Colonic mucosa (tissue), 4 donors: ENCODE measurements at regions of chr10 and their contacts with region 1.

Region 1: DNA sequence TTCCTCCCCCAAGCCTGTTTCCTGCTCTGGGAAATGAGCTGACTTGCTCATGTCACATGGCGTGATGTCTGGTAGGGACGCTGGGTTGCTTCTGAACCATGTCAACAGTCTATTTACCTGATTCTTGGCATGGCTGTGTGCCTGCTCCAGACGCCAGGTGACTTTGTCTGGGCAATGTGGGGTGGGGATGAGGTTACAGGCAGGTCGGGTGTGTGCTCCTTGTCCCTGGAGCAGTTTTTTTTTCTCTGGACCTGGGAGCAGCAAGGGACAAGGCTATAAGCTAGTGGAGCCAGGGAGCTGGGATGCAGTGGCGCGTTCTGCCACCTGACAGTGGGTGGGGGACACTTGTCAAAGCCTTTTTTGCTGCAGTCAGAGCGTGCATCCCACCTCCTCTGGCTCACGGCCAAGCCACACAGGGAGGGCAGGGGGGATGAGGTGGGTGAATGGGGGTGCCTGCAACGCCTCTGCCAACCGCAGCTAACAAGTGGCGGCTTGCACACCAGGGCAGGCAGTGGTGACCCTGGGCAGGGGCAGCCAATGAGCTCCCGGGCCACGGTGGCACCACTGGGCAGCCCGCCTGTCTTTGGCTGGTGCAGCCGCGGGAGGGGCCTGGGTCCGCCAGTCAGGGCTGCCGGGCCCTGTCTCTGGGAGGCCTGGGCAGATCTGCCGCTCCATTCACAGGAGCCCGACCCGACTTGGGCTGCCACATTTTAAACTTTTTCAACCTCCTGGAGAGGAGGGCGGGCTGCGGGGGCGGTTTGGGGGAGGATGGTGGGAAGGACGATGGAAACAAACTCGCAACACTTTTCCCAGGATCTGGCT is 22.9 kb downstream of the DNAJB12 start:
- DNase-seq: peak; percentile 87
- H3K4me3 ChIP-seq: no peak overlapping the region
- H3K27ac ChIP-seq: peak overlapping the region; percentile 86
- H3K4me1 ChIP-seq: peaks cover 20% of the 10 kb centered on the region
- H3K27me3 ChIP-seq: no peaks in the 10 kb centered on the region
- CTCF ChIP-seq: peak; percentile 20

Region 2: GRCh38 chr10:71957546-71958275 is 374.1 kb before region 1 on chr10:
- intact Hi-C with region 1: loop called (anchors 5 kb)
- DNase-seq: no peak
- H3K4me3 ChIP-seq: no peak overlapping the region
- H3K27ac ChIP-seq: no peak overlapping the region
- H3K4me1 ChIP-seq: no peaks in the 10 kb centered on the region
- H3K27me3 ChIP-seq: no peaks in the 10 kb centered on the region
- CTCF ChIP-seq: no peak

Region 3: DNA sequence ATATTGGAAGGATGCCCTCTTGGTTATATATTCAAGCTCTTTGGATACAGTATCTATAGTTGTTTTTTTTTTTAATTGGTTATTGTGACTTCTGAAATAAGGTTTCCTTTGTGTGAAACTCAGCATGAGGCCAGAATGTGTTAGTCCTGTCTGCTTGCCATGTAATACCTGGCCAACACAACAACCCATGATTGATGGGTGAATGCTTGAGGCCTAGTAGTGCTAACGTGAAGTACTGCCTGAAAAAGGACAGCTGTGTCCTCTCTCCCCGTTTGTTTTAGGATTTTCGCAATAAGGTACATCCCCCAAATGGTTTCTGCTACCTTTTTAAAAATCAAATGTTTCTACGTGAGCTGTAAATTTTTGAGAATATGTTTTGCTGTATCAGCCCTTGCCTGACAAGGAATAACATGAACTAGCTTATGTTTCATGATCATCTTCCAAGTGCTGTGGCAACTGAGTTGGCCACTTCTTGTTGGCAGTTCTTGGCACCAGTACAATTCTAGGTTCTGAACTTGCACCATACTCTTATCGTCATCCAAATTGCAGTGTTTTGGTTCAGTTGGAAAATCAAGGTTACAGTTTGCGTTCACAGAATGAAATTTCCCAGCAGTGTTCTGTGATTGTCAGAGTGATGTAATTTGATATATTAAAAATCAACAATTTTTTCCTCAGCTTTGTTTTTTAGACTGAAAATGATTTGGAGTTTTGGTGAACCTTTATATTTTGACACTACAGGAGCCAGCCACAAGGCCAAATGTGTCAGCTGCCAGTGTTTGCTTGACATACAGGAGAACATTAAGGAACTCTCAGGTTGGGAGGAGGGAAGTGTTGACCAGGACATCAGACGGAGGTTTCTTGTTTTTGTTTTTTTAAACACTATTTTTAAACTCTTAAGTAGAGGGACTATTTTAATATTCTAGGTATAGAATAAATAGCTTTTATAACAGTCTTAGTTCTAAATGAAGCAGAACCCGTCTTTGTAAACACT is 102.3 kb before region 1 on chr10:
- intact Hi-C with region 1: loop called (anchors 5 kb)
- DNase-seq: no peak
- H3K4me3 ChIP-seq: no peak overlapping the region
- H3K27ac ChIP-seq: no peak overlapping the region
- H3K4me1 ChIP-seq: no peaks in the 10 kb centered on the region
- H3K27me3 ChIP-seq: no peaks in the 10 kb centered on the region
- CTCF ChIP-seq: no peak

Region 4: DNA sequence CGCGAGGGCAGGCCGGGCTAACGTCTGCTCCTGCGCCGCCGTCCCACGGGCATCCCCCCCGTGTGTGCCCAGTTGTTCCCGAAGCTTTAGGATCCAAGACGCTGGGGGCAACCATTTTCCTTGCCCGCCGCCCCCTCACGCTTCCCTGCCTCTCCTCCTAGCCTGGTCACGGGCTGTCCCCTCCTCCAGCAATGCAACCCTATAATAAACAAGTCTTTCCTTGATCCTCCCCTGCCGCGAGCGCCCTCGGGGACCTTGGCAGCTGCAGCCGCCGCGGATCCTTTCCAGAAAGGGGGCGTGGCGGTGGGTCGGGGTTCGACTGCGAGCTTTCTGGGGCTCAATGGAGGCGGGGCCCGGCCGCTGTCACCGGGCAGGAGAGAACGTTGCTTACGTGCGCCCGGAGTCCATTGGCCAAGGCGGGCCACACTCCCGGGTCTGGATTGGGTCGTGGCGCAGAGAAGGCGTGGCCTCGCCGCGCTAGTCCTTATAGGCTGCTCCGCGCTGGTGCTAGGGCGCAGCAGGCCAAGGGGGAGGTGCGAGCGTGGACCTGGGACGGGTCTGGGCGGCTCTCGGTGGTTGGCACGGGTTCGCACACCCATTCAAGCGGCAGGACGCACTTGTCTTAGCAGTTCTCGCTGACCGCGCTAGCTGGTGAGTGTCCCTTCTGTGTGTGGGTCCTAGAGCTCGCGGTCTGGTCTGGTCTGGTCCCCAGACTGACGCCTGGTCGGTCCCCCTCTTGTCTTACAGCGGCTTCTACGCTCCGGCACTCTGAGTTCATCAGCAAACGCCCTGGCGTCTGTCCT is 58.2 kb before region 1 on chr10 and contains the start of gene DDIT4:
- intact Hi-C with region 1: loop called (anchors 2 kb)
- DNase-seq: peak; percentile 99
- H3K4me3 ChIP-seq: peak within 1 kb of the TSS; percentile 79
- H3K27ac ChIP-seq: peak within 1 kb of the TSS; percentile 97
- H3K4me1 ChIP-seq: peaks cover 28% of the 10 kb centered on the region
- H3K27me3 ChIP-seq: no peaks in the 10 kb centered on the region
- CTCF ChIP-seq: no peak
- total RNA-seq, gene DDIT4: 45.5 to 147 TPM